ENCODE measurements at regions of chr10 and their contacts with region 1.

Region 1: GRCh38 chr10:68385740-68386139 is 21.3 kb downstream of the RUFY2 start:
- DNase-seq: no peak
- ATAC-seq: no peak
- H3K4me3 ChIP-seq: no peak overlapping the region
- H3K27ac ChIP-seq: no peak overlapping the region
- H3K4me1 ChIP-seq: no peaks in the 10 kb centered on the region
- H3K27me3 ChIP-seq: no peaks in the 10 kb centered on the region
- CTCF ChIP-seq: no peak
- POLR2A ChIP-seq: no peak

Region 2: DNA sequence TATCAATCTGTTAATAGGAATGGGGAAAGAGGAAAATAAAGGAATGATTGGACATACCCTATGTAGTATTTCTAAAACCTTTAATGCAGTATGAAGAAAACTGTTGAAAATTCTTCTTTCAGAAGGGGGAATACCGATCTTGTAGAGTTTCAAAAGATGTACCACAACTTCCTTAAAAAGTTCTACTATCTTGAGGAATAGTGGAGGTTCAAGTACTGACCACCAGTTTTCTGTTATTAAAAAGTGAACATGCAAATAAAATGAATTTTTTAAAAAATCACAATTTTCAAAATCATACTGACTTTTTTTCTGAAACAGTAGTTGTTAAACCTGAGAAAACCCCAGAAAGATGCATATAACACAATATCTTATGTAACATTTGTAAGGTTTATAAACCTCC is 397.1 kb before region 1 on chr10:
- in situ Hi-C with region 1: no loop called
- intact Hi-C with region 1: no loop called
- DNase-seq: no peak
- ATAC-seq: no peak
- H3K4me3 ChIP-seq: no peak overlapping the region
- H3K27ac ChIP-seq: no peak overlapping the region
- H3K4me1 ChIP-seq: no peaks in the 10 kb centered on the region
- H3K27me3 ChIP-seq: no peaks in the 10 kb centered on the region
- CTCF ChIP-seq: no peak
- POLR2A ChIP-seq: no peak

Region 3: GRCh38 chr10:68489919-68490318 is 104.2 kb after region 1 on chr10:
- in situ Hi-C with region 1: no loop called
- intact Hi-C with region 1: no loop called
- DNase-seq: no peak
- ATAC-seq: no peak
- H3K4me3 ChIP-seq: no peak overlapping the region
- H3K27ac ChIP-seq: no peak overlapping the region
- H3K4me1 ChIP-seq: no peaks in the 10 kb centered on the region
- H3K27me3 ChIP-seq: no peaks in the 10 kb centered on the region
- CTCF ChIP-seq: no peak
- POLR2A ChIP-seq: no peak

Region 4: DNA sequence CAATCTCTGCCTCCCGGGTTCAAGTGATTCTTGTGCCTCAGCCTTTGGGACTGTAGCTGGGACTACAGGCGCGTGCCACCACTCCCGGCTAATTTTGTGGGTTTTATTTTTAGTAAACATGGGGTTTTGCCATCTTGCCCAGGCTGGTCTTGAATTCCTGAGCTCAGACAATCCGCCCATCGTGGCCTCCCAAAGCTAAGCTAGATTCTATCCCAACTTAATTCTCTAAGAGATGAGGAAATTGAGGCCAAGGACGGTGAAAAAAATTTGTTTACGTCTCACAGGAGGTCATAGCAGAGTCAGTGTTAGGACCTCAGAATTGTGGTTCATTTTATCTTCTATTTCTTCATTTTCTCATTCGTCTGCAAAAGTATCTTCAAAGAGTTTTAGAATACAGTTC is 341.4 kb after region 1 on chr10:
- in situ Hi-C with region 1: loop called in 1 of 4 experiments (anchors 25 kb)
- intact Hi-C with region 1: no loop called
- DNase-seq: no peak
- ATAC-seq: no peak
- H3K4me3 ChIP-seq: no peak overlapping the region
- H3K27ac ChIP-seq: peak overlapping the region in 3 of 4 donors; percentile 35 to 51 (median 45)
- H3K4me1 ChIP-seq: peaks cover 10% of the 10 kb centered on the region in 2 donors
- H3K27me3 ChIP-seq: no peaks in the 10 kb centered on the region
- CTCF ChIP-seq: no peak
- POLR2A ChIP-seq: no peak

Measured in gastrocnemius medialis (tissue), 4 donors.